ENCODE measurements at regions of chr2 and their contacts with region 1.

Region 1: DNA sequence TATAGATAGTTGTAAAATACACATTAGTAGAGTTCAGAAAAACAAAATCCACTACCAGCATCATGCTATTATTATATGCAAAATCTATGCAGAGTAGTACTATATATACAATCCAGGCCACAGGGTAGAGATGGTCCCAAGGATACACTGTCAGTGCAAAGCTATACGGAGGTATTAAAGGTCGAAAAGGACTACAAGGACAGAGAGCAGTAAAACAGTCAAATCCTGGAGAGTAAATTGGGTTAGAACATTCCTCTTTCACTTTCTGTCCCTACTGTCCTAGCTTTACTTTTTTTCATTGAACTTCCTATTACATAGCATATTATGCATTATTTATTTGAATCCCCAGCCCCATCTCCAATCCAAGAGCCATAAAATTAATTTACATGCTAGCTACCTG is 39.7 kb upstream of the SDC1 start:
- DNase-seq: no peak
- H3K4me3 Mint-ChIP-seq: no peak overlapping the region
- H3K27ac Mint-ChIP-seq: no peak overlapping the region
- H3K4me1 Mint-ChIP-seq: peaks cover 4% of the 10 kb centered on the region
- H3K27me3 Mint-ChIP-seq: no peaks in the 10 kb centered on the region

Region 2: DNA sequence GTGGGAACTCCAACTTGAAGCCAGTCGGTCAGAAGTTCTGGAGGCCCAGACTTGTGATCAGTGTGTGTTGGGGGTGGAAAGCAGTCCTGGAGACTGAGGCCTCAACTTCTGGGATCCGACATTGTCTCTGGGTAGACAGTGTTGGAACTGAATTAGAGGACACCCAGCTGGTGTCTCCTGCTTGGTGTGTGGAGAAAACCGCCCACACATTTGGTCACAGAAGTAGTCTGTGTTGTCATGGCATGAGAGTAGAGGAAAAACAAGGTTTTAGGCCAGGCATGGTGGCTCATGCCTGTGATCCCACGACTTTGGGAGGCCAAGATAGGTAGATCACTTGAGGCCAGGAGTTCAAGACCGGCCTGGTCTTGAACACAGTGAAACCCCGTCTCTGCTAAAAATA is 34.5 kb after region 1 on chr2:
- CTCF ChIA-PET with region 1: no interaction called
- intact Hi-C with region 1: loop called (anchors 5 kb)
- DNase-seq: no peak
- H3K4me3 Mint-ChIP-seq: no peak overlapping the region
- H3K27ac Mint-ChIP-seq: peak overlapping the region; percentile 18
- H3K4me1 Mint-ChIP-seq: peaks cover 14% of the 10 kb centered on the region
- H3K27me3 Mint-ChIP-seq: no peaks in the 10 kb centered on the region

Measured in activated naive CD4-positive, alpha-beta T cell treated with anti-CD3 and anti-CD28 coated beads for 36 hours (primary cell).